ENCODE measurements at regions of chr9 and their contacts with region 1.

Region 1: DNA sequence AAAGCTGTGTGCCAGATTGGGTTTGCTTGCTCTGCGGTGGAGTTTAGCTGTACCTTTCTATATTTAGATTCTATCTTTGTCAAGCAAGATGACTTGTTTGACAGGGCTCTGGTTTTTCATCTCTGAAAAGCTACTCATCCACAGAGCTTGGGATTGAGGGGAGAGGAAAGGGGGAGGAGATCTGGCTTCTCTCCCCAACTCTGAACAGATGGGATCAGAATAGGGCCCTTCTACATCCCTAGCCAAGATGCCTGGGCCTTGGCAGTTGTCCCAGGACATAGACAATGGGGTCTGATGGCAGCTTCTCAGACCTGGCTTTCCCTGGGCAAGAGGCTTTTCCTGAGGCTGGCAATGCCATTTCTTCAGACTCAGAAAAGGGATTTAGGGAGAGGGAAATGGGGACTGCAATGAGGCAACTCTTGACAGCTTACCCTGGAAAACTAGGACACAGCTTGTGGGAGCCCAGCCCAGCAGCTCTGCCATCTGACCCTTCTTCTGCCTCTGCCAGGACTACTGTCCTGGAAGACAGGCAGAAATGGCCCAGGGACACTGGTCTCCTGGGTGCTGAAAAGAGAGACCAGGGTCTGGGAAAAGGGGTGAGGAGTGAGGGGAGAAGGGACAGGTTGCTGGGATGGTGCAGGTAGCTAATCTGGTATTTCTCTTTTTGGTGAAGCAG is 50.2 kb upstream of the ASTN2 start:
- DNase-seq: no peak
- ATAC-seq: no peak
- H3K4me3 ChIP-seq: no peak overlapping the region
- H3K27ac ChIP-seq: no peak overlapping the region
- H3K4me1 ChIP-seq: no peaks in the 10 kb centered on the region
- H3K27me3 ChIP-seq: no peaks in the 10 kb centered on the region
- CTCF ChIP-seq: no peak
- POLR2A ChIP-seq: no peak
- RAD21 ChIP-seq: no peak

Region 2: GRCh38 chr9:116616304-116616914 is 848.7 kb before region 1 on chr9:
- CTCF ChIA-PET with region 1: no interaction called
- POLR2A ChIA-PET with region 1: no interaction called
- RAD21 ChIA-PET with region 1: no interaction called
- intact Hi-C with region 1: no loop called
- DNase-seq: no peak
- ATAC-seq: no peak
- H3K4me3 ChIP-seq: no peak overlapping the region
- H3K27ac ChIP-seq: no peak overlapping the region
- H3K4me1 ChIP-seq: no peaks in the 10 kb centered on the region
- H3K27me3 ChIP-seq: no peaks in the 10 kb centered on the region
- CTCF ChIP-seq: no peak
- POLR2A ChIP-seq: no peak
- RAD21 ChIP-seq: no peak

Region 3: DNA sequence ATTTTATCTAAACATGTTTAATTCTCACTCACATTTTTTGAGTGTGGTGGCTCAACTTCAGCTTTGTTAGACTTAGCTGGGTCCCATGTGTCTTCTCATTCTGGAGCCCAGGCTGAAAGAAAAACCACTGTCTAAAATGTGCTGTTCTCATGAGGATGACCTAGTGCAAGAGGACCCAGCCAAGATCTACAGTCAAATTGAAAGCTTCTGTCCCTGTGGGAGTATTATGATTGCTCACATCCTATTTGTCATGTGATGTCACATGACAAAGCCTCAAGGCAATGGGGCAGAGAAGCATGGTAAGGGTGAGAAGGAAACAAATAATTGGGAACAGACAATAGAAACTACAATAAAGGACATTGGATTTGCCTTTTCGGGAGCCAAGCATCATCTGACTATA is 63.1 kb after region 1 on chr9:
- CTCF ChIA-PET with region 1: no interaction called
- POLR2A ChIA-PET with region 1: no interaction called
- RAD21 ChIA-PET with region 1: no interaction called
- intact Hi-C with region 1: loop called (anchors 2 kb)
- DNase-seq: no peak
- ATAC-seq: no peak
- H3K4me3 ChIP-seq: no peak overlapping the region
- H3K27ac ChIP-seq: no peak overlapping the region
- H3K4me1 ChIP-seq: no peaks in the 10 kb centered on the region
- H3K27me3 ChIP-seq: no peaks in the 10 kb centered on the region
- CTCF ChIP-seq: no peak
- POLR2A ChIP-seq: no peak
- RAD21 ChIP-seq: no peak

Measured in HCT116 (cell line).